Endothelial cell of umbilical vein (primary cell): ENCODE measurements at regions of chr9 and their contacts with region 1.

Region 1: DNA sequence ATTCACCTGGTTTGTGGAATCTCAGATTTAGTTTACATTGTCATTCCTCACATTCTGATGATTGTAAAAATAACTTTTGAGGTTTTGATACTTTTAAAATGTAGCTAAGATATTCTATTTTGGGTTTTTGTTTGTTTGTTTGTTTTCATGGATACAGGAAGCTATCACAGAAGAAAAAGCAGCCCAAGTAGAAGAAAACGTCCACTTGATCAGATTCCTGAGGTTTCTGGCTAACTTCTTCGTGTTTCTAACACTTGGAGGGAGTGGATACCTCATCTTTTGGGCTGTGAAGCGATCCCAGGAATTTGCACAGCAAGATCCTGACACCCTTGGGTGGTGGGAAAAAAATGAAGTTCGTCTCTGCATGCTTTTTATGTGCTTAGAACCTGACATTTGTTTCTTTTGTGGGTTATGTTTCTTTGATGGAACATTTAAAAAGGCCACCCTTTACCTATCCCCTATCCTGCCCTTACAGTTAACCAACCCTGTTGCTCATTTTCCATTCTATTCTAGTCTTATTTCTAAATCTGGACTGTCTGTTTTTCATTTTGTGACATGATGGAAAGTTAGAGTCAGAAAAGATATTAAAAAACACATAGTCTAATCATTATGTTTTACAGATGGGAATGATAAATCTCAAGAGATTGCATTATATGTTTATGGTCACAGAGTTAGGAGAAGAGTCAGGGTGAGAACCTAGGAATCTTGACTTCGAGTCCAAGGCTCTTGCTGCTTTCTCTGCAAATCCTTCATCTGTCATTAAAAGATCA is 163.7 kb downstream of the ALDH1A1 start:
- DNase-seq: no peak
- H3K4me3 ChIP-seq: no peak overlapping the region
- H3K27ac ChIP-seq: no peak overlapping the region
- H3K4me1 ChIP-seq: no peaks in the 10 kb centered on the region
- H3K27me3 ChIP-seq: peaks cover 6% of the 10 kb centered on the region in 2 experiments
- CTCF ChIP-seq: no peak
- POLR2A ChIP-seq: no peak

Region 2: GRCh38 chr9:72401396-72401795 is 387.8 kb before region 1 on chr9:
- CTCF ChIA-PET with region 1: no interaction called
- POLR2A ChIA-PET with region 1: no interaction called
- dilution Hi-C with region 1: no loop called
- intact Hi-C with region 1: no loop called
- DNase-seq: no peak
- H3K4me3 ChIP-seq: no peak overlapping the region
- H3K27ac ChIP-seq: no peak overlapping the region
- H3K4me1 ChIP-seq: no peaks in the 10 kb centered on the region
- H3K27me3 ChIP-seq: no peaks in the 10 kb centered on the region
- CTCF ChIP-seq: no peak
- POLR2A ChIP-seq: no peak

Region 3: GRCh38 chr9:72623156-72623555 is 166.0 kb before region 1 on chr9:
- CTCF ChIA-PET with region 1: no interaction called
- POLR2A ChIA-PET with region 1: no interaction called
- dilution Hi-C with region 1: no loop called
- intact Hi-C with region 1: loop called (anchors 10 kb)
- DNase-seq: no peak
- H3K4me3 ChIP-seq: no peak overlapping the region
- H3K27ac ChIP-seq: no peak overlapping the region
- H3K4me1 ChIP-seq: no peaks in the 10 kb centered on the region
- H3K27me3 ChIP-seq: no peaks in the 10 kb centered on the region
- CTCF ChIP-seq: no peak
- POLR2A ChIP-seq: no peak

Region 4: DNA sequence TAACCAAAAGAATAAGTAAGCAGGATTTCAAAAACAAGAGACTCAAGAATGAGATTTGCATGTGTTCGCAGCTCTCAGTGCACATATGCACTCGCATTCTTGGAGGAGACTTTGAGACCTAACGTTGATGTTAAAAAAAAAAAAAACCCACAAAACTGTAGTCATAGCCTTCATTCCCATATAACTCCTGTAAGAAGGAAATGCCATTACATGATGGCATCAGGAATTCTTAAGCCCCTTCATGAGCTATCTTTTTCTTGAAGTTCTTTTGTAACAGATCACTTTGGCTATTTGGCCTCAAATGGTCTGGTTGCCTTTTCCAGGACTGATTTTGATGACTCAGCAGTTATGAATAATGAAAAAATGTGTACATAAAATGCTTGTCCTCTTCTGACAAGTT is 49.9 kb after region 1 on chr9:
- CTCF ChIA-PET with region 1: no interaction called
- POLR2A ChIA-PET with region 1: no interaction called
- dilution Hi-C with region 1: no loop called
- intact Hi-C with region 1: no loop called
- DNase-seq: no peak
- H3K4me3 ChIP-seq: no peak overlapping the region
- H3K27ac ChIP-seq: no peak overlapping the region
- H3K4me1 ChIP-seq: no peaks in the 10 kb centered on the region
- H3K27me3 ChIP-seq: peaks cover 0 to 7% of the 10 kb centered on the region in 2 experiments
- CTCF ChIP-seq: no peak
- POLR2A ChIP-seq: no peak